ENCODE measurements at regions of chr2 and their contacts with region 1.

Region 1: GRCh38 chr2:231563378-231563961 is 29.2 kb upstream of the TEX44 start:
- DNase-seq: peak; percentile 33
- H3K4me3 ChIP-seq: no peak overlapping the region
- H3K27ac ChIP-seq: no peak overlapping the region
- H3K4me1 ChIP-seq: no peaks in the 10 kb centered on the region
- H3K27me3 ChIP-seq: no peaks in the 10 kb centered on the region
- CTCF ChIP-seq: peak; percentile 66 to 87

Region 2: DNA sequence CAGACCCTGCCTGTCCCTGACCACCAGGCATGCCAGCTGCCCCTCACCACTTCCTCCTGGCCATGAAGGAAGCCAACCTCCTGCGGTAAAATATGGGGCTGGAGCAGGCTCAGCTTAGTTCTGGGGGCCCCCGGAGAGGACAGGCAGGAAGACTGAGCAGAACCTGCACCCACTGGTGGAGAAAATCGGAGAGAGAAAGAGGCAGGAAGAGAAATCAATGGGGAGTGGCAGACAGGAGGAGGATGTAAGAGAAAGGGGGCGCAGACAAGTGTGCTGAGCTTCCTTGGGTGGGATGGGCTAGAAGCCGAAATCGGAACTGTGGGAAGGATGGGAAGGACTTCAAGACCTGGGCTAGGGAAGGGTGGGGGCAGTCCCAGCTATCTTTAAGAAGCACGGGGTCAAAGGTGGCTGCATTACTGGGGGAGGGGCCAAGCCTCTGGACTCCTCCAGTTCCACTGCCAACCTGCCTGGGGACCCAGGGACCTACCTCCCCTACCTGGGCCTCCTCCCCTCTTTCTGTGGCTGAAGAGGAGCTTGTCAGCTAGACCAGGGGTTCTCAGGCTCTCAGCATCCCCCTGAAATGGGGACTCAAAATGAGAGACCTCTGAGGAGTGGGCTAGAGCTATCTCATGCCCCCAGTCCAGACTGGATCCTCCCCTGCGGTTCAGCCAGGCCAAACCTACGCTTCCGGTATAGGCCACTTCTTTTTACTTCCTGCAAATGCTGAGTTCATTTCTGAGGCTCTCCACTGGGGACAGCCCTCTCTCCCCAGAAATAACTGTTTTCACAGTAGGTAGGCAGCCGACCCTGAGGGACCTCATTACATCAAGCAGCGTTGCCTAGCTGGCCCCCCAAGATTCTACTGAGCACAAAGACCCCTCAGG is 201.6 kb before region 1 on chr2:
- CTCF ChIA-PET with region 1: no interaction called
- dilution Hi-C with region 1: no loop called
- in situ Hi-C with region 1: no loop called
- intact Hi-C with region 1: no loop called
- DNase-seq: no peak
- H3K4me3 ChIP-seq: no peak overlapping the region
- H3K27ac ChIP-seq: no peak overlapping the region
- H3K4me1 ChIP-seq: peaks cover 15% of the 10 kb centered on the region
- H3K27me3 ChIP-seq: no peaks in the 10 kb centered on the region
- CTCF ChIP-seq: no peak

Region 3: DNA sequence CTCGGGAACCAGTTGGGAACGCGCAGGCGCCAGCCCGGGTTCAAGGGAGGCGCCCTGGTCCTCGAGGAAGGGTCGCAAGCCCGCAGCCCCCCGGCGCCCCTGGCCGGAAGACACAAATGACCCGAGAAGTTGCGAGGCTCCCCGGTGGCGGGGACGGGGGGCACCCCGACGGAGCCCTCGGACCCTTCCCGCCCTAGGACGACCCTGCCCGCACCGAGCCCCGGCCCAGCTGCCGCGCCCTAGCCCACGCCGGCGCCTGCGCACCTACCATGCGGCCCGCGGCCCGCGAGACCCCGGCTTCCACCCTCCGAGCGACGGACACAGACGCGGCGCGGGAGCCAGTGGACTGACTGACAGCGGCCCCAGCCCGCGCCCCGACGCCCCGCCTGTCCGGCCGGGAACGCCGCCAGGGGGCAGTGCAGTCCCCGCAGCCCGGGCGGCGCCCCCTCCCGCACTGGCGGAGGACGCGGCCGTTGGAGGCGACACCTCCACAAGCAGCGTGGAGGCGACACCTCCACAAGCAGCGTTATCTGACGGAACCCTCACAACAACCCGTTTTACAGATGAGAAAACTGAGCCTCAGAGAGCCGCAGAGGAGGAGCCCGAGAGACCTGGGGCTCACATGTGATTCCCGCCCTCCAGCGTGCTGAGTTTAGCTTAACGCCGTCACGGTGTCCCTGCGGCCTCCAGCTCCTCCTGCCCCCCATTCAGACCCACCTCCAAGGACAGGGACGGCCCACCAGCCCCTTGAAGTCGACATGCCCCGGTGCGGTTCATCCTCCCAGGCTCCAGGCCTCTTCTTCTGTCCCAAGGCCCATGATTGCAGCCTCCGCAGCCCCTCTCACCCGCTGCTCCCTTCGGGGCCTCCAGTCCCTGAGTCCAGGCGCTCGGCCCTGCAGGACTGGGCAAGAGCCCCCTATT is 33.1 kb before region 1 on chr2 and contains the start of gene NMUR1:
- CTCF ChIA-PET with region 1: no interaction called
- dilution Hi-C with region 1: no loop called
- in situ Hi-C with region 1: no loop called
- intact Hi-C with region 1: no loop called
- DNase-seq: no peak
- H3K4me3 ChIP-seq: no peak within 1 kb of the TSS
- H3K27ac ChIP-seq: no peak within 1 kb of the TSS
- H3K4me1 ChIP-seq: no peaks in the 10 kb centered on the region
- H3K27me3 ChIP-seq: peaks cover 11% of the 10 kb centered on the region
- CTCF ChIP-seq: peak; percentile 47 to 57
- total RNA-seq, gene NMUR1: not detected

Region 4: GRCh38 chr2:231604685-231605606 is 41.5 kb after region 1 on chr2:
- CTCF ChIA-PET with region 1: interaction called, 10 read pairs
- dilution Hi-C with region 1: no loop called
- in situ Hi-C with region 1: no loop called
- intact Hi-C with region 1: loop called (anchors 1 kb)
- DNase-seq: peak; percentile 94
- H3K4me3 ChIP-seq: peak overlapping the region; percentile 25 to 56 (median 46)
- H3K27ac ChIP-seq: peak overlapping the region; percentile 96
- H3K4me1 ChIP-seq: peaks cover 16% of the 10 kb centered on the region
- H3K27me3 ChIP-seq: no peaks in the 10 kb centered on the region
- CTCF ChIP-seq: no peak

Region 5: GRCh38 chr2:231713730-231714430 is 150.4 kb after region 1 on chr2:
- CTCF ChIA-PET with region 1: interaction called, 6 read pairs
- dilution Hi-C with region 1: no loop called
- in situ Hi-C with region 1: no loop called
- intact Hi-C with region 1: loop called (anchors 1 kb)
- DNase-seq: peak; percentile 74
- H3K4me3 ChIP-seq: no peak overlapping the region
- H3K27ac ChIP-seq: no peak overlapping the region
- H3K4me1 ChIP-seq: peaks cover 16% of the 10 kb centered on the region
- H3K27me3 ChIP-seq: no peaks in the 10 kb centered on the region
- CTCF ChIP-seq: peak; percentile 87 to 97

Region 6: GRCh38 chr2:232133078-232133477 is 569.6 kb after region 1 on chr2:
- CTCF ChIA-PET with region 1: interaction called, 22 read pairs
- dilution Hi-C with region 1: no loop called
- in situ Hi-C with region 1: no loop called
- intact Hi-C with region 1: no loop called
- DNase-seq: peak; percentile 22
- H3K4me3 ChIP-seq: no peak overlapping the region
- H3K27ac ChIP-seq: no peak overlapping the region
- H3K4me1 ChIP-seq: no peaks in the 10 kb centered on the region
- H3K27me3 ChIP-seq: no peaks in the 10 kb centered on the region
- CTCF ChIP-seq: peak; percentile 23 to 32